Right lobe of liver (tissue), 6 donors: ENCODE measurements at regions of chr20 and their contacts with region 1.

Region 1: DNA sequence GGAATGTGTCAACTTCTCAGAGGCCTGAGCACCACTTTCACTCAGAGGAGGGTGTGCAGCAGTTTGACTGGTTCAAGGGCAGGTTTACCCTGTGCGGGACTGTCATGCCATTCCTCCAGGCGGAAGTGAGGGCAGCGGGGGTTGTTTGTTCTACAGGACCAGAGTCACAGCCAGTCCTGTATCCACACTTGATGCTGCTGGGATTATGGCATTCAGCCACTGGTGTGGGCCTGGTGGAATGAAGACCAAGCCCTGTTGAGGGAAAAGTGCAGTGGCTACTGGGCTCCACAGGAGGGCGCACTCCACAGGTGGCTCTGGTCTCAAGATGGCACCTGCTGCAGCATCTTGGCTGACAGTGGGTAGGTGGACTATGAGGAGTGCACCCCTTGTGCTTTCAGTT is 14.8 kb downstream of the SEMG2 start:
- DNase-seq: no peak
- ATAC-seq: peak; percentile 49 to 69 (median 60)
- H3K4me3 ChIP-seq: no peak overlapping the region
- H3K27ac ChIP-seq: no peak overlapping the region
- H3K4me1 ChIP-seq: no peaks in the 10 kb centered on the region
- H3K27me3 ChIP-seq: peaks cover 0 to 3% of the 10 kb centered on the region in 2 donors
- CTCF ChIP-seq: peak; percentile 45 to 60 (median 52)
- POLR2A ChIP-seq: no peak

Region 2: GRCh38 chr20:45289942-45290676 is 54.1 kb after region 1 on chr20:
- intact Hi-C with region 1: loop called in 1 of 2 experiments (anchors 5 kb)
- DNase-seq: no peak
- ATAC-seq: no peak
- H3K4me3 ChIP-seq: no peak overlapping the region
- H3K27ac ChIP-seq: no peak overlapping the region
- H3K4me1 ChIP-seq: peaks cover 0 to 9% (median 3%) of the 10 kb centered on the region in 4 donors
- H3K27me3 ChIP-seq: peaks cover 0 to 6% of the 10 kb centered on the region in 2 donors
- CTCF ChIP-seq: no peak
- POLR2A ChIP-seq: no peak